B cell (primary cell): ENCODE measurements at regions of chr14 and their contacts with region 1.

Region 1: DNA sequence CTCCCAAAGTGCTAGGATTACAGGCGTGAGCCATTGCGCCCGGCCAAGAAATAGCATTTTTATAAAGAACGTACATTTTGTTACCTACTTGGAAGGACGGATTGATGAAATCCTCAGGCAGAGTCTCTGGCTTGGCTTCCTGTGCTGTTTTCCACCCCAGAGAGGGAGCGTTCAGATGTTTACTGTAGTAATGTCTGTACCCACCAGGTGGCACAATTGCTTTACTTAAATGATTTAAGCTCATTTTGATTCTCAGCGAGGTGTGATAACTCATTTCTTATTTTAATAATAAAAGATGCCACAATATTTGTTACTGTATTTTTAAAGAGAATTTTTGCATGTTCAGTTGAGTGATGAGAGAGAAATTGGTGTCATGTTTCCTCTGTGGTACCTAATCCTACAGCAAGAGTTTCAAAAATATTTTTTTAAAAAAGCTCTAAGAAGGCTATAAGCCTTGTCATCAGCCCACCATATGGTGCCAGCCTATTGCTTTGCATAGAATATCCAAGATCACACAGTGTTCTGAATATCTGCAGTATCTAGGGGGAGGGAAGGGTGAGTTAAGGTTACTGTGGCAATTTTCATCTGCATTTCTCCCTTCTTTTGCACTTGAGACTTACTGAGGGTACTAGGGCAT is 82.6 kb upstream of the TRAF3 start:
- DNase-seq: peak; percentile 81
- ATAC-seq: peak; percentile 64
- H3K4me3 ChIP-seq: no peak overlapping the region
- H3K4me3 Mint-ChIP-seq: no peak overlapping the region
- H3K27ac ChIP-seq: no peak overlapping the region
- H3K27ac Mint-ChIP-seq: no peak overlapping the region
- H3K4me1 ChIP-seq: peaks cover 8 to 10% of the 10 kb centered on the region in 2 donors
- H3K4me1 Mint-ChIP-seq: peaks cover 36% of the 10 kb centered on the region
- H3K27me3 ChIP-seq: no peaks in the 10 kb centered on the region
- H3K27me3 Mint-ChIP-seq: no peaks in the 10 kb centered on the region
- CTCF ChIP-seq: peak; percentile 78

Region 2: GRCh38 chr14:102591889-102592763 is 102.5 kb before region 1 on chr14 and contains the start of gene RCOR1:
- CTCF ChIA-PET with region 1: interaction called, 34 read pairs
- POLR2A ChIA-PET with region 1: no interaction called
- intact Hi-C with region 1: loop called (anchors 5 kb)
- DNase-seq: peak; percentile 97
- ATAC-seq: peak; percentile 82
- H3K4me3 ChIP-seq: peak within 1 kb of the TSS; percentile 73 to 91 (median 83)
- H3K4me3 Mint-ChIP-seq: peak within 1 kb of the TSS; percentile 89
- H3K27ac ChIP-seq: peak within 1 kb of the TSS; percentile 82 to 95
- H3K27ac Mint-ChIP-seq: peak within 1 kb of the TSS; percentile 97
- H3K4me1 ChIP-seq: peaks cover 10 to 22% of the 10 kb centered on the region in 2 donors
- H3K4me1 Mint-ChIP-seq: peaks cover 26% of the 10 kb centered on the region
- H3K27me3 ChIP-seq: no peaks in the 10 kb centered on the region
- H3K27me3 Mint-ChIP-seq: no peaks in the 10 kb centered on the region
- CTCF ChIP-seq: no peak
- total RNA-seq, gene RCOR1: 37.1 and 38.4 TPM in 2 replicates

Region 3: GRCh38 chr14:102759456-102760187 is 65.0 kb after region 1 on chr14:
- CTCF ChIA-PET with region 1: interaction called, 12 read pairs
- POLR2A ChIA-PET with region 1: no interaction called
- intact Hi-C with region 1: no loop called
- DNase-seq: no peak
- ATAC-seq: no peak
- H3K4me3 ChIP-seq: no peak overlapping the region
- H3K4me3 Mint-ChIP-seq: no peak overlapping the region
- H3K27ac ChIP-seq: no peak overlapping the region
- H3K27ac Mint-ChIP-seq: no peak overlapping the region
- H3K4me1 ChIP-seq: peaks cover 27 to 33% of the 10 kb centered on the region in 2 donors
- H3K4me1 Mint-ChIP-seq: peaks cover 46% of the 10 kb centered on the region
- H3K27me3 ChIP-seq: no peaks in the 10 kb centered on the region
- H3K27me3 Mint-ChIP-seq: no peaks in the 10 kb centered on the region
- CTCF ChIP-seq: no peak

Region 4: GRCh38 chr14:102878174-102878969 is 183.7 kb after region 1 on chr14:
- CTCF ChIA-PET with region 1: interaction called, 14 read pairs
- POLR2A ChIA-PET with region 1: interaction called, 4 read pairs
- intact Hi-C with region 1: no loop called
- DNase-seq: peak; percentile 35
- ATAC-seq: no peak
- H3K4me3 ChIP-seq: no peak overlapping the region
- H3K4me3 Mint-ChIP-seq: no peak overlapping the region
- H3K27ac ChIP-seq: peak overlapping the region in 1 of 2 donors; percentile 32
- H3K27ac Mint-ChIP-seq: peak overlapping the region; percentile 38
- H3K4me1 ChIP-seq: no peaks in the 10 kb centered on the region
- H3K4me1 Mint-ChIP-seq: no peaks in the 10 kb centered on the region
- H3K27me3 ChIP-seq: no peaks in the 10 kb centered on the region
- H3K27me3 Mint-ChIP-seq: no peaks in the 10 kb centered on the region
- CTCF ChIP-seq: no peak

Region 5: DNA sequence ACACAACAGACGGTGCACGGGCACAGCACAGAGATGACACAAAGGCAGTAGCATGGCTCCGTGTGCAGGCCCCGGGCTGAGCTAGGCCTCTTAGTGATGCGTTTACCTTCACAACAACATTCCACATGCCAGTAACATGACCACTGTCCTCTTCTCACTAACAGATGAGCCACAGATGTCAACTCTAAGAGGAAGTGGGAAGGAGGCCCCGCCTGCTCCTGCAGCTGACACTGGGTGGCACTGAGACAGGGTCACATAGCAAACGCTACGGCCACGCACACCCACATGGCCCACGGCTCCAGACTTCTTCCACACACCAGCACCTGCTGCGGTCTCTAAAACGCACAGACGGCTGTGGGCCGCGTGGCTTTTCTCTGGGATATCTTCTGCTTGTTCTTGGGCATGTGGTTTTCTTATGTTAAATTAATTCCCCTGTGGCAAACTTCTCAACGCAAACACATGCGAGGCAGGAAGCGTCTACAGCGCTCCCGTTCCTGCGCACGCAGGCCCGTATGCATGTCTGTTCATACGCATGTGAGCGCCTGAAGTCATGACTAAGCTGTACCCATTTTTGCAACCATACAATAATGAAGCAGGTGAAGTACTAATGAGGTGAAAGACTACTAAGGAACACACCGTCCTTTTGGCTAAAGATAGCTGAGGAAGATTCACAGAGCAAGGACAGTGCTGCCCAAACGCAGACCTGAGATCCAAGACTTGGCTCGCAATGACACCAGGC is 254.6 kb after region 1 on chr14:
- CTCF ChIA-PET with region 1: interaction called, 11 read pairs
- POLR2A ChIA-PET with region 1: no interaction called
- intact Hi-C with region 1: loop called (anchors 1 kb)
- DNase-seq: peak; percentile 87
- ATAC-seq: peak; percentile 86
- H3K4me3 ChIP-seq: peak overlapping the region in 3 of 5 experiments; percentile 8 to 22 (median 11)
- H3K4me3 Mint-ChIP-seq: peak overlapping the region; percentile 74
- H3K27ac ChIP-seq: peak overlapping the region; percentile 71 to 80
- H3K27ac Mint-ChIP-seq: peak overlapping the region; percentile 87
- H3K4me1 ChIP-seq: peaks cover 17 to 36% of the 10 kb centered on the region in 2 donors
- H3K4me1 Mint-ChIP-seq: peaks cover 32% of the 10 kb centered on the region
- H3K27me3 ChIP-seq: no peaks in the 10 kb centered on the region
- H3K27me3 Mint-ChIP-seq: no peaks in the 10 kb centered on the region
- CTCF ChIP-seq: no peak

Region 6: DNA sequence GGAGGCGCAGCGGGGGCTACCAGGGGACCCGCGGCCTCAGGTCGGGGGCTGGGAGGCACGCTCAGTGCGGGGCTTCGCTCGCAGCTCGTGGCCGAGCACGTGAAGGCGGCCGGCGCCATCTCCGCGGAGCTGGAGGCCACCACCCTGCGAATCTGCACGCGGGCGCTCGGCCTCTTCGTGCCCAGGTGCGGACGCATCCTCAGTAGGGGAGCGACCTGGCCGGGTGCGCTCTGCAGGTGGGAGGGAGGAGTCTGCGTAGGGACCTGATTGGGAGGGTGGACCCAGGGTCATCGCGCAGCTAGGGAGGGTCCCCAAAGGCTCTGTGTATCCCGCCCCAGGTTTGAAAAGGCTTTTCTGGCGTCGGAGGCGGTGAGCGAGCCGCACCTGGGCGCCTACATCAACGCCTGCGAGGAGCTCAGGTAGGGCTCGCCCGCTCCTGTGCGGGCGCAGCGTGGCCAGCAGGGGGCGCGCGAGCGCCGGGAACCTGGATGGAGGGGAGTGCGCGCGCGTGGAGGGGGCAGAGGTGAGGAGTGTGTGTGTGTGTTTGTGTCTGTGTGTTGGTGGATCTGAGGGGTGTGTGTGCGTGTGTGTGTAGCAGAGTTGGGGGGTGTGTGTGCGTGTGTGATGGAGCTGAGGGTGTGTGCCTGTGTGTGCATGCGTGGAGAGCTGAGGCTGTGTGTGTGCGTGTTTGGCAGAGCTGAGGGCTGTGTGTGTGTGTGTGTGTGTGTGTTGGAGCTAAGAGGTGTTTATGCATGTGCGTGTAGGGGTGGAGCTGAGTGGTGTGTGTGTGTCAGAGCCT is 410.2 kb after region 1 on chr14:
- CTCF ChIA-PET with region 1: interaction called, 34 read pairs
- POLR2A ChIA-PET with region 1: no interaction called
- intact Hi-C with region 1: no loop called
- DNase-seq: peak; percentile 84
- ATAC-seq: peak; percentile 74
- H3K4me3 ChIP-seq: peak overlapping the region in 1 of 5 experiments; percentile 19
- H3K4me3 Mint-ChIP-seq: peak overlapping the region; percentile 32
- H3K27ac ChIP-seq: no peak overlapping the region
- H3K27ac Mint-ChIP-seq: peak overlapping the region; percentile 56
- H3K4me1 ChIP-seq: peaks cover 43 to 46% of the 10 kb centered on the region in 2 donors
- H3K4me1 Mint-ChIP-seq: peaks cover 30% of the 10 kb centered on the region
- H3K27me3 ChIP-seq: peaks cover 0 to 47% (median 17%) of the 10 kb centered on the region in 4 experiments
- H3K27me3 Mint-ChIP-seq: peaks cover 20% of the 10 kb centered on the region
- CTCF ChIP-seq: peak; percentile 80